Panc1 (cell line): ENCODE measurements at regions of chr9 and their contacts with region 1.

Region 1: GRCh38 chr9:127828262-127829031 is 25.8 kb downstream of the FPGS start:
- DNase-seq: no peak
- ATAC-seq: no peak
- H3K4me3 ChIP-seq: no peak overlapping the region
- H3K27ac ChIP-seq: no peak overlapping the region
- H3K4me1 ChIP-seq: no peaks in the 10 kb centered on the region
- H3K27me3 ChIP-seq: no peaks in the 10 kb centered on the region
- CTCF ChIP-seq: no peak

Region 2: DNA sequence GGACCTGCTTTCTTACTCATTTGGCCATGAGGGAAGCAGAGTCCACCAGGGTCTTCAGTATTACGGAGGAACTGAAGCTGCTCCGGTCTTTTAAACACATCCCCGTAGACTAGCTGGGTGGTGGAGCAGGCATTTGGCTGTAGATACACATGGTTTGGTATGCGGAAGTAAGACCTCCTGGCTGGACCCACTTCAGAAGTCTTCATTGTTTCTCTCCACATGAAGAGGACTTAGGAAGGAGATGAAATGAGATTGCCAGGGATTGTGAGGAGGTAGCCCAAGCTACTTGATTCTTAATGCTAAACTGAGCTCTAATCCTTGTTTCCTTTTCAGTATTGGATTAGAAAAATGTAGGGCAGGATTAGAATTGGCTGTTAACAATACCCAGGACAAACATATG is 183.5 kb before region 1 on chr9:
- CTCF ChIA-PET with region 1: no interaction called
- POLR2A ChIA-PET with region 1: interaction called, 16 read pairs
- in situ Hi-C with region 1: no loop called
- intact Hi-C with region 1: no loop called
- DNase-seq: no peak
- ATAC-seq: no peak
- H3K4me3 ChIP-seq: no peak overlapping the region
- H3K27ac ChIP-seq: no peak overlapping the region
- H3K4me1 ChIP-seq: no peaks in the 10 kb centered on the region
- H3K27me3 ChIP-seq: no peaks in the 10 kb centered on the region
- CTCF ChIP-seq: no peak

Region 3: GRCh38 chr9:127817881-127818434 is 10.5 kb before region 1 on chr9:
- CTCF ChIA-PET with region 1: no interaction called
- POLR2A ChIA-PET with region 1: no interaction called
- in situ Hi-C with region 1: no loop called
- intact Hi-C with region 1: no loop called
- DNase-seq: no peak
- ATAC-seq: no peak
- H3K4me3 ChIP-seq: no peak overlapping the region
- H3K27ac ChIP-seq: no peak overlapping the region
- H3K4me1 ChIP-seq: no peaks in the 10 kb centered on the region
- H3K27me3 ChIP-seq: no peaks in the 10 kb centered on the region
- CTCF ChIP-seq: no peak

Region 4: DNA sequence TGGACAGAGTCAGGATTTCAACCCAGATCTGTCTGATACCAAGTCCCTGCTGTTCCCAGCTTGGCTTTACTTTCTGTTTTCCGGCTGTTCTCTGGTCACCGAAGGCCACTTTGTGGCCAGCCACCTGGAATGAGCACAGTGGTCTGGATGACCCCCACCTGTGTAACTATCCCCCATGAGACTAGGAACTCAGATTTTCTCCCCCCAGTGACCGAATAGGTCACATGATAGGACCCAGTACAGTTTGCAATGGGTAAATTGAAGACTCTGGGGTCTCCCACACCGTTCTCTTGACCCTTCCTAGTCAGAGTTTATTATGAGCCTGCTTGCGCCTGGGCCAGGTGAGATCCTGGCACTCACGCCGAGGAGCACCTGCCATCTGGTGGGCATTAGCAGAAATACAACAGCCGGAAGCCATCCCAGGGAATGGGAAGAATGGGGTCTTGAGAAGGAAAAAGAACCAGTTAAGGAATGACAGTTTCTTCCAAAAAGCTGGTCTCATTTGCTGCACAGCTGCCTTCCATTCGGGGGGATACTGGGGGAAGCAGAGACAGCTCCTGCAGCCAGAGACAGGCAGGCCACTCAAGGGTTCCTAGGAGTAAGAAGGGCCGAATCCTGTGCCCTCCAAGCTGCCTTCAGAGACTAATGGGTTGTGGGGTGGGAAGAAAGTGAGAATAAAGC is 1099.4 kb after region 1 on chr9:
- CTCF ChIA-PET with region 1: no interaction called
- POLR2A ChIA-PET with region 1: no interaction called
- in situ Hi-C with region 1: no loop called
- intact Hi-C with region 1: no loop called
- DNase-seq: no peak
- ATAC-seq: peak; percentile 93
- H3K4me3 ChIP-seq: no peak overlapping the region
- H3K27ac ChIP-seq: no peak overlapping the region
- H3K4me1 ChIP-seq: no peaks in the 10 kb centered on the region
- H3K27me3 ChIP-seq: no peaks in the 10 kb centered on the region
- CTCF ChIP-seq: peak; percentile 87